ENCODE measurements at regions of chr1 and their contacts with region 1.

Region 1: GRCh38 chr1:48498096-48498791 is 26.2 kb upstream of the SPATA6 start:
- DNase-seq: peak; percentile 55
- H3K4me3 ChIP-seq: no peak overlapping the region
- H3K27ac ChIP-seq: no peak overlapping the region
- H3K4me1 ChIP-seq: no peaks in the 10 kb centered on the region
- CTCF ChIP-seq: peak; percentile 95

Region 2: GRCh38 chr1:48450505-48450904 is 47.7 kb before region 1 on chr1:
- CTCF ChIA-PET with region 1: no interaction called
- POLR2A ChIA-PET with region 1: no interaction called
- intact Hi-C with region 1: loop called (anchors 5 kb)
- DNase-seq: no peak
- H3K4me3 ChIP-seq: no peak overlapping the region
- H3K27ac ChIP-seq: no peak overlapping the region
- H3K4me1 ChIP-seq: no peaks in the 10 kb centered on the region
- CTCF ChIP-seq: peak; percentile 56

Measured in OCI-LY7 (cell line).